ENCODE measurements at regions of chr5 and their contacts with region 1.

Region 1: GRCh38 chr5:31638748-31639418 is at the start of gene PDZD2:
- DNase-seq: peak in 1 of 2 donors; percentile 89
- H3K4me3 ChIP-seq: peak within 1 kb of the TSS; percentile 81
- H3K27ac ChIP-seq: peak within 1 kb of the TSS; percentile 68 to 69
- H3K4me1 ChIP-seq: peaks cover 5 to 6% of the 10 kb centered on the region in 2 donors
- H3K27me3 ChIP-seq: no peaks in the 10 kb centered on the region
- CTCF ChIP-seq: peak; percentile 26 to 59 (median 56)
- total RNA-seq, gene PDZD2: 8.1 TPM

Region 2: DNA sequence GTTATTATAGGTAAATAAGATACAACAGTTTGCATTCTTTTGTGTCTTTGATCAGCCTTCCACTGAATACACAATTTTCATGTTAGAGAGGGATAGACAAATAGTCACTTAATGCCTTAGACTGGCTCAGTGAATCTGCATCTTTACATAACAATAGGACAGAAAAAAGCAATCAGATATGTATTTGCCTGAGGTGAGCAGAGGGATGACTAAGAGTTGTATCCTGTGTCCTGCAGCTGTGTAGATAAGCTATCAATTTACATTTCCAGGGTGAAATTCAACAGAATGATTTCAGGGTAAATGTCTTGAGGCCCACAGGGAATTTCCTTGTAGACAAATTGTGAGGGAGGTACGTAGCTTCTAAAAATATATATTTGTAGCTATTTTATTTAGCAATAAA is 1031.6 kb before region 1 on chr5:
- intact Hi-C with region 1: no loop called
- DNase-seq: no peak
- H3K4me3 ChIP-seq: no peak overlapping the region
- H3K27ac ChIP-seq: no peak overlapping the region
- H3K4me1 ChIP-seq: no peaks in the 10 kb centered on the region
- H3K27me3 ChIP-seq: no peaks in the 10 kb centered on the region
- CTCF ChIP-seq: no peak

Region 3: GRCh38 chr5:31196309-31196708 is 442.6 kb before region 1 on chr5:
- intact Hi-C with region 1: loop called (anchors 5 kb)
- DNase-seq: no peak
- H3K4me3 ChIP-seq: no peak overlapping the region
- H3K27ac ChIP-seq: no peak overlapping the region
- H3K4me1 ChIP-seq: no peaks in the 10 kb centered on the region
- H3K27me3 ChIP-seq: no peaks in the 10 kb centered on the region
- CTCF ChIP-seq: peak in 1 of 3 experiments; percentile 28

Region 4: GRCh38 chr5:31285025-31285424 is 353.9 kb before region 1 on chr5:
- intact Hi-C with region 1: no loop called
- DNase-seq: no peak
- H3K4me3 ChIP-seq: no peak overlapping the region
- H3K27ac ChIP-seq: no peak overlapping the region
- H3K4me1 ChIP-seq: no peaks in the 10 kb centered on the region
- H3K27me3 ChIP-seq: no peaks in the 10 kb centered on the region
- CTCF ChIP-seq: no peak

Region 5: GRCh38 chr5:31664566-31664965 is 25.7 kb after region 1 on chr5:
- intact Hi-C with region 1: loop called (anchors 1 kb)
- DNase-seq: no peak
- H3K4me3 ChIP-seq: no peak overlapping the region
- H3K27ac ChIP-seq: peak overlapping the region; percentile 79 to 82
- H3K4me1 ChIP-seq: peaks cover 4 to 12% of the 10 kb centered on the region in 2 donors
- H3K27me3 ChIP-seq: no peaks in the 10 kb centered on the region
- CTCF ChIP-seq: no peak

Region 6: GRCh38 chr5:31741496-31741895 is 102.6 kb after region 1 on chr5:
- intact Hi-C with region 1: loop called (anchors 5 kb)
- DNase-seq: peak in 1 of 2 donors; percentile 74
- H3K4me3 ChIP-seq: no peak overlapping the region
- H3K27ac ChIP-seq: peak overlapping the region; percentile 18 to 28
- H3K4me1 ChIP-seq: peaks cover 0 to 10% of the 10 kb centered on the region in 2 donors
- H3K27me3 ChIP-seq: no peaks in the 10 kb centered on the region
- CTCF ChIP-seq: no peak

Region 7: GRCh38 chr5:31809050-31809870 is 170.4 kb after region 1 on chr5:
- intact Hi-C with region 1: loop called (anchors 2 kb)
- DNase-seq: peak in 1 of 2 donors; percentile 79
- H3K4me3 ChIP-seq: no peak overlapping the region
- H3K27ac ChIP-seq: no peak overlapping the region
- H3K4me1 ChIP-seq: no peaks in the 10 kb centered on the region
- H3K27me3 ChIP-seq: no peaks in the 10 kb centered on the region
- CTCF ChIP-seq: peak; percentile 50 to 77 (median 64)

Region 8: DNA sequence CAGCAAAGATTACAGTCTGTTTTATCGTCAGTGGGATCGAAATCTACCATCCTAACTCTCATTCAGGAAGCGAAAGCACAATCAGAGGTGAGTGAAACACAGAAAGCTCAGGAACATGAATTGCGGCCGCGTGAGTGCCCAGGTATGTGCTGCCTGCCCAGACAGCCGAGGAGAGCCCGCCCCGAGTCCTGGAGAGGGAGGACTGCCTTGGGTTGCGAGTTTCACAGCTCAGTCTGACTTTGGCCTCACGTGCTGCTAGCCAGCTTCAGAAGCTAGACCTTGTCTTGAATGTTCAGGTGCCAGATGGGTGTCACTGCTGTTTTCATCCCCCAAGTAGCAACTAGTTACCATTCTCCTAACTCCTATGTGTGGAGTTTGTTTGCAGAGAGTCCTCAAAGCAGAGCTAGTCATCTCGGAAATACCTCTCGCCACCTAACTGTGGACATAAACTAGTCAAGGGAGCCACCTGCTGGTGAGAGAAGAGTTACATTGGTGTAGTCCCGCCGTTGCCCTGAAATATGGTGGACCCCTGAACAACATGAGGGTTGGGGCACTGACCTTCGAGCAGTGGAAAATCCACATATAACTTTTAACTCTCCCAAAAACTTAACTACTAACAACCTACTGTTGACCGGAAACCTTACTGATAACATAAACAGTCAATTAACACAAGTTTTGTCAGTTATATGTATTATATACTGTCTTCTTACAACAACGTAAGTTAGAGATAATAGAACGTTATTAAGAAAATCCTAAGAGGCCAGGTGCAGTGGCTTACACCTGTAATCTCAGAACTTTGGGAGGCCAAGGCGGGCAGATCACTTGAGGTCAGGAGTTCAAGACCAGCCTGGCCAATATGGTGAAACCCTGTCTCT is 454.3 kb after region 1 on chr5:
- intact Hi-C with region 1: loop called (anchors 10 kb)
- DNase-seq: peak in 1 of 2 donors; percentile 78
- H3K4me3 ChIP-seq: no peak overlapping the region
- H3K27ac ChIP-seq: no peak overlapping the region
- H3K4me1 ChIP-seq: peaks cover 0 to 7% of the 10 kb centered on the region in 2 donors
- H3K27me3 ChIP-seq: no peaks in the 10 kb centered on the region
- CTCF ChIP-seq: peak; percentile 65 to 71 (median 65)